Mammary epithelial cell (primary cell): ENCODE measurements at regions of chr19 and their contacts with region 1.

Region 1: GRCh38 chr19:12064590-12065538 is at the start of gene ZNF844:
- DNase-seq: peak; percentile 43
- H3K4me3 ChIP-seq: peak within 1 kb of the TSS in 1 of 3 experiments; percentile 29
- H3K27ac ChIP-seq: no peak within 1 kb of the TSS
- H3K4me1 ChIP-seq: no peaks in the 10 kb centered on the region
- H3K27me3 ChIP-seq: no peaks in the 10 kb centered on the region
- CTCF ChIP-seq: no peak
- total RNA-seq, gene ZNF844: 1.0 to 4.2 TPM

Region 2: DNA sequence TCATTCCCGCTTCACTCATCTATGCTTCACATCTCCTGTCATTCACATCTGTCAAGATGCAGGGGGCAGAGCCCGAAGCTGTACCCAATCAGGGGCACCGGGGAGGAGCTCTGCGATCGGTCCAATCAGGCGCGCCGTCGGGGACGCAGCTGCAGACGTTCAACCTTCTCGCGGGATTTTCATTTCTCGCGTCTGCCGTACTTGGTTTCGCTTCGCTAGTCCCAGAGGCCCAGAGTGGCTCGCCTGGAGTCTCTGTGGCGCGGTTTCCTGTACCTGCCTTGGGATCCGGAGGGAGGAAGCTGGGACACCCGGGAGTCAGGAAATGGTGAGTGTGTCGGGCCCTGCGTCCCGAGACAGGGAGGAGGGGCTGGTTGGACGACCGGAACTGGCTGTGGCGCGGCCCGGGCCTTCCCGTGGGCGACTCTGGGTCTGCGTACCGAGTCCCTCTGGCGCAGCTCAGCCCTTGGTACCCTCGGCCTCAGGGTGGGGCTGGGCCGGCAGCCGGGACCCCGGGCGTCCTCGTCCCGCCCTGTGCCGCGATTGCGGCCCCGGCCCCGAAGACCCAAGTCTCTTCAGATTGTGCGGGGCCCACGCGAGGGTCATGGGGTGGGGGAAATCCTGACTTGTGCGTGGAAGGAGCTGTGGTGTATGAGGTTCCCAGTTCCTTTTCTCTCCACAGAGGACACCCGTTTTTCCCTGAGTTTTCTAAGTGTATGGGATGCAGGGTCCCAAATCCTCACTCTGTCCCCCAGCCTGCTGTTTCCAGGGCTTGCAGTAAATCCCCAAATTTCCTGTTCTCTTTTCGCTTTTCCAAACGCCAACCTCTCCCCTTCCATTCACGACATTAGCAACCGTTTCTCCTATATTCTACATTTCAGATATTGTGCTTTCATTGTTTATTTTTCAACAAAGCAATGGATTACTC is 98.3 kb after region 1 on chr19 and contains the start of gene ZNF136:
- CTCF ChIA-PET with region 1: interaction called, 10 read pairs
- dilution Hi-C with region 1: no loop called
- in situ Hi-C with region 1: no loop called
- intact Hi-C with region 1: no loop called
- DNase-seq: peak; percentile 96
- H3K4me3 ChIP-seq: peak within 1 kb of the TSS; percentile 67 to 93 (median 67)
- H3K27ac ChIP-seq: peak within 1 kb of the TSS; percentile 76
- H3K4me1 ChIP-seq: peaks cover 5% of the 10 kb centered on the region
- H3K27me3 ChIP-seq: no peaks in the 10 kb centered on the region
- CTCF ChIP-seq: no peak
- total RNA-seq, gene ZNF136: 5.4 to 6.7 TPM